GM10248 (cell line): ENCODE measurements at regions of chr1 and their contacts with region 1.

Region 1: DNA sequence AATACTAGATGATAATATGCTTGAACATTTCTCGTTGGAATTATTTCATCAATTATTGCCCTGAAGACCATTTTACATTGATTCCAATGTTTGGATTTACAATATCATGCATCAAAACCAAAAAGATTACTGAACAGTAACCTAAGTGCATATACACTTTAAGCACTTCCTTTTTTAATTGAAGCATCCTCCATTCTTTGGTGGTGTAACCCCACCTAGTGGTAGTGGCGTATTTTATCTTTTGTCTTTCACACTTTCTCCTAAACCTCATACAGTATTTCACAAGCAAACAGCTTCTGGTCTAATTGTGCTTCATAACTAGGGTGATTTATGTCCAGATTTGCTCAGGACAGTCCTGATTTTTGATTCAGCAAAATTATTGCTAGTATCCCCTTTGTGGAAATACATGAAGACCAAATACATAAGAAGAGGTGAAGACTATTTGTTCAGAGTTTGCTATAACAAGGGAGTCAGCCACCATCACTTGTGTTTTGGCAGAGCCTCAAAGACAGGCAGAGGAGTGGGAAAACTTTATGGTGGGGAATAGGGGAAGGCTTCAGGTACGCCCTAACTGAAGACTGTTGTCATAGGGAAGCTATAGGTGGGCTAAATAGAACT is 3.4 kb upstream of the NVL start:
- DNase-seq: peak; percentile 50
- CTCF ChIP-seq: peak; percentile 56

Region 2: GRCh38 chr1:224113918-224114786 is 219.3 kb before region 1 on chr1 and contains the start of gene FBXO28:
- CTCF ChIA-PET with region 1: interaction called, 47 read pairs
- POLR2A ChIA-PET with region 1: no interaction called
- DNase-seq: peak; percentile 95
- CTCF ChIP-seq: no peak

Region 3: GRCh38 chr1:224343679-224344078 is 10.3 kb after region 1 on chr1:
- CTCF ChIA-PET with region 1: interaction called, 13 read pairs
- POLR2A ChIA-PET with region 1: interaction called, 3 read pairs
- DNase-seq: no peak
- CTCF ChIP-seq: no peak

Region 4: DNA sequence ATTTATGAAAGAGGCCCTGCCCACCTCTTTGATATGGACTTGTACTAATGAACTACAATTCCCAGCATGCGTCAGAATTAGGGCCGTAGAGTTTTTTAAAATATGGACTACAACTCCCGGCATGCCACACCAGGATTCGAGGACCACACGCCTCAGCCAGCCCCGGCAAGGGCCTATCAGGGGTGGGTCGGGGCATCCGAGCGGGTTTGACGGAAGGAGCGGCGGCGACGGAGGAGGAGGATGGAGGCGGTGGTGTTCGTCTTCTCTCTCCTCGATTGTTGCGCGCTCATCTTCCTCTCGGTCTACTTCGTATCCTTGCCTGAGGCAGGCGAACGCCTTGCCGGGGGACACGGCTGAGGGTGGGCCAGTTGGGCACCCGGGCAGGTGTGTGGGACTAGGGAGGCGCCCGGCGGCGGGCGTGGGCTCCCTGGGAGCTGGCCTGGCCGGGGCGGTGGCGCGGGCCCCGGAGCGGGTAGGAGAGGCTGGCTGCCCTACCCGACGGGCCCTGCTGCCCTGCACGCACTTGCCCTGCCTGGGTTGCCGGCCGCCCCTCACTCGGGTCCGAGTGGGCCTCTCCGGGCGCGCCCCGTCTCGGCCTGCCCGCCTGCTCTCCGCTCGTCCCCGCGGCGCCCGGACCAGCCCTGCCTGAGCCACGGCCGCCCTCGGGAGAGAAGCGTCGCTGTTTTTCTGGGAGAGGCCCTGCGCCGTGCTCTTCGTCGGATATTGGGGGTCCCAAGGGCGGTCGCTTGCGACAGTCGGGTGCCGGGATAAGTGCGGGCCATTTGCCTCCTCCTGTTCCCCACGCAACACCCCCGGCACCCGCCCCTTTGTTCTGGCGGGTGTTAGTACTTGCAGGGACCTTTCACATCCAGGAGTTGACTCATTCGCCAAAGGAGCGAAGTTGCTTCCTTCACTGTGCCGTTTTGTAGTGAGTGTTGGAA is 23.5 kb after region 1 on chr1 and contains the start of gene CNIH4:
- CTCF ChIA-PET with region 1: interaction called, 13 read pairs
- POLR2A ChIA-PET with region 1: interaction called, 3 read pairs
- DNase-seq: peak; percentile 94
- CTCF ChIP-seq: no peak